Dorsolateral prefrontal cortex (tissue), 120 donors: ENCODE measurements at regions of chr6 and their contacts with region 1.

Region 1: GRCh38 chr6:27753668-27754407 is 158.4 kb downstream of the OR2B2 start:
- DNase-seq: peak in 9 of 10 donors; percentile 44 to 76 (median 62)
- H3K4me3 ChIP-seq: peak overlapping the region; percentile 27 to 92 (median 78)
- H3K27ac ChIP-seq: peak overlapping the region in 42 of 59 donors; percentile 7 to 85 (median 52)
- H3K27me3 ChIP-seq: peaks cover 0 to 30% (median 10%) of the 10 kb centered on the region in 45 donors
- CTCF ChIP-seq: peak in 4 of 56 donors; percentile 5 to 31 (median 6)

Region 2: GRCh38 chr6:27177485-27178406 is 576.1 kb before region 1 on chr6:
- intact Hi-C with region 1: loop called in 1 of 2 experiments (anchors 5 kb)
- DNase-seq: peak; percentile 63 to 89 (median 83)
- H3K4me3 ChIP-seq: peak overlapping the region; percentile 55 to 100 (median 95)
- H3K27ac ChIP-seq: peak overlapping the region in 53 of 59 donors; percentile 28 to 91 (median 78)
- H3K27me3 ChIP-seq: peaks cover 0 to 18% (median 0%) of the 10 kb centered on the region in 45 donors
- CTCF ChIP-seq: peak in 42 of 56 donors; percentile 4 to 55 (median 35)

Region 3: DNA sequence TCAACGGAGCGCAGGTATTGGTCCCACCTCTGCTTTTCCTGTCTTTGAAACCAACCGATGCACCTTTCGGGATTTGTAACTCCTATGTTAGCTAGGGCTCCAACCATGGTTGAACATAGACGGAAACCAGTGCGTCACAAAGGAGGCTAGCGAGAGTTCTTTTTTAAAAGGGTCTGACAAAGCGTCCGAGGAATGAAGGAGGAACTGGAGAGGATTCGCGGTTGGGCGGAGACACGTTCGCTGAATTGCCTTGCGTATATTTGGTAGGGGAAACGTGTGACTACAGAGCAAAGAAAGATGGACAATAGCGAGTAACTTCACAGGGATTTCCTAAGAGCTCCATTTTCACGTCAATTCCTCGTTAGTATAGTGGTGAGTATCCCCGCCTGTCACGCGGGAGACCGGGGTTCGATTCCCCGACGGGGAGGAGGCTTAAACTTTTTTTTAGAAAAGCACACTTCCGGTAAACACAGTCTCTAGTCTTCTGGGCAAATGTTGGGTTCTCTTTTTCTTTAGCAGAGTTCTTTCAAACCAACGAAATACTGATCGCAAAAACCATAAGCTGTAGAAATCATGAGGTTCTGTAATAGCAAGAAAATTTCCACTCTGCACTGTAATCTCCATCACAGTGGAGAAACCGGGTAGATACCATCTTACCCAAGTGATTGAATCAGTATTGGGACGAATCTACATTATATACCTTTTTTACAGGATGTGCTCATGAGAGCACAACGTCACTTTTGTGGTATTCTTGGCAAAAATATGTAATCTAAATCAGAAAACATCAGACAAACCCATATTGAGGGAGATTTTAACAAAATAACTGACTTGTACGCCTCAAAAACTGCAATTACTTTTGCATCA is 274.3 kb before region 1 on chr6:
- intact Hi-C with region 1: loop called (anchors 5 to 10 kb)
- DNase-seq: peak; percentile 55 to 79 (median 68)
- H3K4me3 ChIP-seq: peak overlapping the region; percentile 57 to 93 (median 81)
- H3K27ac ChIP-seq: peak overlapping the region; percentile 63 to 99 (median 95)
- H3K27me3 ChIP-seq: no peaks in the 10 kb centered on the region
- CTCF ChIP-seq: peak in 12 of 56 donors; percentile 6 to 33 (median 12)

Region 4: DNA sequence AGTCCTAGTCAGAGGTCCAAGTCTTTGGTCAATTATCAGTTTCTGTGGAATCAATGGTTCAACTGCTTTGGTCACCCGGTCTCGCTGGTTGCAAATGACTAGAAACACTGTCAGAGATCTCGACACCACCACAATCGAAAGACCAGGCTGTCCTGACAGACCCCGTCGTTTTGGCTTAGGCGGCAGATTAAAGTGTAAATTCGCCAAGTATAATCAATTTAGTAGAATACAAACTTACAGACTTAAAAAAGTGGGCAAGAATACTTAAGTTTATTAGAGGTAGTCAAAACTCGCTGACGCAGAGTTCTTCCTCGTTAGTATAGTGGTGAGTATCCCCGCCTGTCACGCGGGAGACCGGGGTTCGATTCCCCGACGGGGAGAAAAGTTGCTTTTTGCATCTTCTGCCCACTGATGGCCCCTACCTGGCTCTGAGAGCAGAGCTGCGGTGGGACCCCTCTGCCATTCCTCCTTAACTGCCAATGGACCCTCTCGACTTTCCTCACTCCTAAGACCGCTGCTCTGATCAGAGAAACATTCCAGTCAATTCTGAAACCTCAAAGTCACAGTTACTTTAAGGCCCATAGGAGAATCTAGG is 250.3 kb before region 1 on chr6:
- intact Hi-C with region 1: no loop called
- DNase-seq: peak in 3 of 10 donors; percentile 12 to 41 (median 37)
- H3K4me3 ChIP-seq: peak overlapping the region; percentile 9 to 65 (median 46)
- H3K27ac ChIP-seq: peak overlapping the region in 6 of 59 donors; percentile 19 to 55 (median 34)
- H3K27me3 ChIP-seq: peaks cover 0 to 93% (median 38%) of the 10 kb centered on the region in 45 donors
- CTCF ChIP-seq: peak in 2 of 56 donors; percentile 5 to 9

Region 5: DNA sequence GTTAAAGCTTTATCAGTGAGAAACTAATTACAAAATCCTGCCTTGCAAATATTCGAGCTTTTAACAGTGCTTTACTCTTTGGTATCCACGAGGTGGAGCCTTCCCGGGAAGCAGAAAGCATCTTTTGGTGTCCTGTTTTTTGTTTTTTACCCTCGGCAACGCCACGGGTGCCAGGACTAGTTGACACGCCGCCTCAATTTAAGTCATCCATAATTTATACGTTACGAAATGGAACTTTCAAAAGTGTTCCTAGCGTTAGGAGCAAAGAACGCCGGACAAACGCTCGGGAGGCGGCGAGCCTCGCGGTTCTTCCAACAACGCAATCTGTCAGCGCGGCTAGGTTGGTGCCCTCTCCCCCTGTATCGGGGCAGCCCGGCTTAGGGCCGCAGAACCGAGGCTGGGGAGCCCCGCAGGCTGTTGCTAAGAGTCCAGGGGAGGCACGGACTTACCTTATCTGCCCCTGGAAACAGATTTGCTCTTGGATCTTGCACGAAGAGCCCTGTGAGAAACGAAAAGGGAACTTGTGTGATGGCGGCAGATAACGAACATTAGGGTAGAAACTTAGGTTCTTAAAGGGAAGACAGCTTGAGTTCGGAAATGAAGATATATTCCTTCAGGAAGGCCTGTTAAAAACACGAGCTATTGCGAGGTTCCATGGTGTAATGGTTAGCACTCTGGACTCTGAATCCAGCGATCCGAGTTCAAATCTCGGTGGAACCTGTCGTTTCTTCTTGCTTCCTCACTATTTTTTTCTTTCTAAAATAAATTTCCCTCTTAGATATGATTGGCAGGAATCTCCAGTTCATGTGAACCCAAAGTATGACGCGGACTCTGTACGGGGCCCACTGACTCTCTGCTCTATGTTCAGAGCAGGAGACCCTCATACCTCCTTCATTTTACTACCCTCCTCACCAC is 234.7 kb before region 1 on chr6:
- intact Hi-C with region 1: loop called (anchors 2 kb)
- DNase-seq: peak in 8 of 10 donors; percentile 43 to 69 (median 58)
- H3K4me3 ChIP-seq: peak overlapping the region; percentile 61 to 97 (median 83)
- H3K27ac ChIP-seq: peak overlapping the region; percentile 52 to 97 (median 90)
- H3K27me3 ChIP-seq: peaks cover 0 to 23% (median 9%) of the 10 kb centered on the region in 45 donors
- CTCF ChIP-seq: peak; percentile 51 to 78 (median 70)

Region 6: GRCh38 chr6:27687154-27688013 is 66.5 kb before region 1 on chr6:
- intact Hi-C with region 1: loop called in 1 of 2 experiments (anchors 5 kb)
- DNase-seq: peak; percentile 60 to 90 (median 82)
- H3K4me3 ChIP-seq: peak overlapping the region; percentile 39 to 81 (median 62)
- H3K27ac ChIP-seq: peak overlapping the region in 50 of 59 donors; percentile 9 to 85 (median 64)
- H3K27me3 ChIP-seq: peaks cover 0 to 11% (median 4%) of the 10 kb centered on the region in 45 donors
- CTCF ChIP-seq: peak in 53 of 56 donors; percentile 25 to 68 (median 49)

Region 7: GRCh38 chr6:27814660-27815424 is 61.0 kb after region 1 on chr6:
- intact Hi-C with region 1: no loop called
- DNase-seq: peak in 1 of 10 donors; percentile 50
- H3K4me3 ChIP-seq: peak overlapping the region; percentile 6 to 67 (median 44)
- H3K27ac ChIP-seq: peak overlapping the region in 30 of 59 donors; percentile 18 to 79 (median 57)
- H3K27me3 ChIP-seq: peaks cover 0 to 93% (median 58%) of the 10 kb centered on the region in 45 donors
- CTCF ChIP-seq: no peak

Region 8: GRCh38 chr6:27902335-27903314 is 148.8 kb after region 1 on chr6:
- intact Hi-C with region 1: loop called (anchors 5 kb)
- DNase-seq: peak; percentile 74 to 92 (median 84)
- H3K4me3 ChIP-seq: peak overlapping the region; percentile 51 to 86 (median 71)
- H3K27ac ChIP-seq: peak overlapping the region; percentile 58 to 98 (median 91)
- H3K27me3 ChIP-seq: no peaks in the 10 kb centered on the region
- CTCF ChIP-seq: peak in 19 of 56 donors; percentile 6 to 39 (median 15)